Activated B cell treated with CpG ODN at 0.5 μM for 24 hours (primary cell): ENCODE measurements at regions of chr18 and their contacts with region 1.

Region 1: DNA sequence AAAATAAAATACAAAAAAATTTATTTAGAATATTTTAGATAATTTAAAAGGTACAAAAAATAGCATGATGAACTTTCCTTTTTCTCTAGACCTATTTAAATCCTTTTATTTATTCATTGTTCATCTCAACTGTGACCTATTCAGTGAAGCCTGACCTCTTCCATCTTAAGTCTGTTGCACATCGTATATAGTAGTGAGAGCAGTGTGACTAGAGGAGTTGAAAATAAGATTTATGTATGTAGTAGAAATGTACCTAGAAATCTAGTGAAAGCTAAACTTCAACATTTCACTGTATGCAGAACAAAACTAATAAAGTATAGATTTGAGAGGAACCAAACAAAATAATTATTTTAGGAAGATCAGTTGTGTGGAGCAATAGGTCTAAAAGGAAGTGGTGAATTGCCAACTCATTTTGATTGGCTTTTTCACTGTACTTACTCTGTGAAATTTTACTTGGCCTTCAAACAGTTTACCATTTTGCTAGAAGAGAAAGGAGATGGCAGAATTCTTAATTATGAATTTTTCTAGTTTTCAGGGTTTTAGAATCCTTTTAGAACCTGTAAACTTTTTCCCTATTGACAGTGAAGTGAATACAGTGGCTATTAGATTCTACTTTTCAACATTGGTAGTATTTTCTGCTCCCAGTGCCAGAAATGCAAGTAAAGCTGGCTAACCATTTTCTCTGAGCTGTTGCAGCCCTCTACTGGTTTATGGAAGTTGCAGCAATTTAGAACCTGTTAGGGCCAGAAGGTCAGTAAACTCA is 11.0 kb downstream of the ANKRD12 start:
- DNase-seq: no peak
- ATAC-seq: peak; percentile 62
- H3K4me3 Mint-ChIP-seq: peak overlapping the region; percentile 39
- H3K27ac Mint-ChIP-seq: peak overlapping the region; percentile 83
- H3K4me1 Mint-ChIP-seq: peaks cover 79% of the 10 kb centered on the region
- H3K27me3 Mint-ChIP-seq: no peaks in the 10 kb centered on the region
- CTCF ChIP-seq: no peak

Region 2: GRCh38 chr18:8696749-8697211 is 450.8 kb before region 1 on chr18:
- CTCF ChIA-PET with region 1: interaction called, 4 read pairs
- POLR2A ChIA-PET with region 1: no interaction called
- intact Hi-C with region 1: loop called (anchors 2 kb)
- DNase-seq: peak; percentile 74
- ATAC-seq: peak; percentile 82
- H3K4me3 Mint-ChIP-seq: no peak overlapping the region
- H3K27ac Mint-ChIP-seq: no peak overlapping the region
- H3K4me1 Mint-ChIP-seq: peaks cover 12% of the 10 kb centered on the region
- H3K27me3 Mint-ChIP-seq: no peaks in the 10 kb centered on the region
- CTCF ChIP-seq: peak; percentile 62

Region 3: GRCh38 chr18:9066817-9067306 is 80.8 kb before region 1 on chr18:
- CTCF ChIA-PET with region 1: interaction called, 44 read pairs
- POLR2A ChIA-PET with region 1: interaction called, 7 read pairs
- intact Hi-C with region 1: no loop called
- DNase-seq: no peak
- ATAC-seq: peak; percentile 72
- H3K4me3 Mint-ChIP-seq: peak overlapping the region; percentile 62
- H3K27ac Mint-ChIP-seq: peak overlapping the region; percentile 91
- H3K4me1 Mint-ChIP-seq: peaks cover 73% of the 10 kb centered on the region
- H3K27me3 Mint-ChIP-seq: no peaks in the 10 kb centered on the region
- CTCF ChIP-seq: no peak

Region 4: DNA sequence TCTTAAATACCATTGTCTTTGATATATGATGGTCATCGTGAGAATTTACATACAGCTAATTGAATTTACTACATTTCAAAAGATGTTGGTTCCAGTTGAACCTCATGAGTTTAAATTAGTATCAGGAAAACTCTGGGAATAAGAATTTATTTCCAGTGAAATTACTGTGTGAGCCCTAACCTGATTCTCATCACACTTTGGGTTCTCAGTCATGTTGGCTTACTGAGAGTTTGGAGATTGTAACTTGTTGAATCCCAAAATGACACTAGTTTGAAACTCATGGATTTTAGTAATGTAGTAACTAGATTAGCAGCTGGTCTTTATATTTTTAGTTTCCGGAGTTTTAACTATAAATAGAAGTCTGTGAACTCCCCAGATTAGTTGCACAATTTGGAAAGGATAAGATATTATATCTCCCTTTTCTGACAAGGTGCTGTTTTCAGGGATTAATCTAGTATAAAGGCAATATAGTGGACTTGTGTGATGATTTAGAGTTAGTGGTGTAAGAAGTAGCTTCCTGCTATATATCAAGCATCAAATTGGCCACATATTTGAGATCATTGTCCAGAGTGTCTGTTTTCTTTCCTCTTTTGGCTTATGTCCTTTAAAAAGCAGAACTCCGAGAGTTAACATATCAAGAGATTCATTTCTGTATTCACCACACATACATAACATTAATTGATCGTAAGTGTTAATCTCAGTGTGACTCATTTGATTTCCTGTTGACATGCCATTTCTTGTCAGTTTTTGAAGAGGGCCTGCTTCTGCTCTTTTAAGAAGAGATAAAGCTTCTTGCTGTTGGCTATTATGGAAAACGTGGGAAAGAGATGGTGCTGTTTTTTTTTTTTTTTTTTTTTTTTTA is 29.4 kb before region 1 on chr18:
- CTCF ChIA-PET with region 1: interaction called, 3 read pairs
- POLR2A ChIA-PET with region 1: interaction called, 26 read pairs
- intact Hi-C with region 1: no loop called
- DNase-seq: no peak
- ATAC-seq: peak; percentile 35
- H3K4me3 Mint-ChIP-seq: peak overlapping the region; percentile 86
- H3K27ac Mint-ChIP-seq: peak overlapping the region; percentile 99
- H3K4me1 Mint-ChIP-seq: peaks cover 84% of the 10 kb centered on the region
- H3K27me3 Mint-ChIP-seq: no peaks in the 10 kb centered on the region
- CTCF ChIP-seq: no peak

Region 5: GRCh38 chr18:9184998-9185613 is 37.5 kb after region 1 on chr18:
- CTCF ChIA-PET with region 1: interaction called, 3 read pairs
- POLR2A ChIA-PET with region 1: no interaction called
- intact Hi-C with region 1: loop called (anchors 5 kb)
- DNase-seq: no peak
- ATAC-seq: no peak
- H3K4me3 Mint-ChIP-seq: peak overlapping the region; percentile 71
- H3K27ac Mint-ChIP-seq: peak overlapping the region; percentile 51
- H3K4me1 Mint-ChIP-seq: peaks cover 59% of the 10 kb centered on the region
- H3K27me3 Mint-ChIP-seq: no peaks in the 10 kb centered on the region
- CTCF ChIP-seq: no peak